ENCODE measurements at regions of chr5 and their contacts with region 1.

Region 1: GRCh38 chr5:161446655-161447054 is 99.9 kb downstream of the GABRB2 start:
- DNase-seq: no peak
- H3K4me3 ChIP-seq: no peak overlapping the region
- H3K27ac ChIP-seq: no peak overlapping the region
- H3K4me1 ChIP-seq: peaks cover 0 to 2% (median 0%) of the 10 kb centered on the region in 4 donors
- H3K27me3 ChIP-seq: no peaks in the 10 kb centered on the region
- CTCF ChIP-seq: no peak

Region 2: DNA sequence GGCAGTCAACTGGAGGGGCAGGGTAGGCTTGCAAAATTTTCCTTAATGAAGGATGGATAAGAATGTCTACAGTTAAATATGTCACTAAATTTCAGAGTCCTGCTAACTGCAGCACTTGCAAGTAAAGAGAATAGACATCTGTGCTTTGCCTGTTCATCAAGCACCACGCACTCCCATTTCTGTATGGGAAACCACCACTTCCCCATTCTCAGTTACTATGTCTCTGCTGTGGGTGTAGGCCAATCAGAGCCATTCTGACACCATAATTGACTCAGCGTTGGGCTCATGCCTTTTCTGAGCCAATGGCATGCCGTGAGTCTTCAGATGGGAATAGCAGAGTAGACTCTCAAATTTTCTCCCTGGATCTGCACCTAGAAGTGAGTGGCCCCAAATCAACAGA is 147.6 kb before region 1 on chr5:
- intact Hi-C with region 1: no loop called
- DNase-seq: no peak
- H3K4me3 ChIP-seq: no peak overlapping the region
- H3K27ac ChIP-seq: no peak overlapping the region
- H3K4me1 ChIP-seq: peaks cover 0 to 22% (median 2%) of the 10 kb centered on the region in 4 donors
- H3K27me3 ChIP-seq: no peaks in the 10 kb centered on the region
- CTCF ChIP-seq: no peak

Region 3: DNA sequence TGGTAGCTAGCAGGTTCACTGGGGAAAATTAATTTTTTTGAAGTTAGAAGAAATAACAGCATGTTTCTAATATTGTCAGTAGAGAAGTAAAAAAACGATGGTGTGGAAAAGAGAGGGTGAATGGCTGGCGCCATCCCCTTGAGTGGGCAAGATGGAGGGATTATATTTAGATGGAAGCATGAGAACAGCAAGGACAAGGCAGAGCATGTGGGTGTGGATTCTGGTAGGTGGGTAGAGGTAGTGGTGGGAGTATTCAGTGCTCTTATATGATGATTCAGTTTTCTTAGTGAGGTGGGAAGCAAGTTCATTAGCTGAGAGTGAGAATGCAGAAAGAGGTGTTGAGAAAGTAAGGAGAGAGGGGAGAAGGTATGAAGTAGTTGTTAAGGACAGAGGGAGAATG is 88.2 kb before region 1 on chr5:
- intact Hi-C with region 1: no loop called
- DNase-seq: no peak
- H3K4me3 ChIP-seq: no peak overlapping the region
- H3K27ac ChIP-seq: no peak overlapping the region
- H3K4me1 ChIP-seq: no peaks in the 10 kb centered on the region
- H3K27me3 ChIP-seq: no peaks in the 10 kb centered on the region
- CTCF ChIP-seq: no peak

Region 4: DNA sequence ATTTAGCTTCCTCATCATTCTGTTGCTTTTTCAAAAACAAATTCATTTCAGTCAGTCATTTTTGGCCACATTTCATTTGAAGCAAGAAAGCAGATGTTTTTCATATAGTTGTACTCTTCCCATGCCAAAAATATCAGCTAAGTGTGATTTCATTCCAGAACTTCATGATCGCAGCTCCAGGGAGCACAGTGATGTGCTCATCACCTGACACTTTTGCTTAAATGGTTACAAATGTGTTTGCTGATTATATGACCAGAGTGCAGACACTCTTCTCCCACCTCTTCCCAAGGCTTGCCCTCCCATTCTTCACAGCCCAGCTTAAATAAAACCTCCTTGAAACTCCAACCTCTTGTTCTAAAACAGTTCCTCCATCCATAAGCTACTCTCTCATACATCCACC is 67.3 kb after region 1 on chr5:
- intact Hi-C with region 1: no loop called
- DNase-seq: no peak
- H3K4me3 ChIP-seq: no peak overlapping the region
- H3K27ac ChIP-seq: no peak overlapping the region
- H3K4me1 ChIP-seq: no peaks in the 10 kb centered on the region
- H3K27me3 ChIP-seq: no peaks in the 10 kb centered on the region
- CTCF ChIP-seq: no peak

Region 5: GRCh38 chr5:161685461-161685860 is 238.8 kb after region 1 on chr5 and contains the start of gene GABRA6:
- intact Hi-C with region 1: loop called (anchors 10 kb)
- DNase-seq: no peak
- H3K4me3 ChIP-seq: no peak within 1 kb of the TSS
- H3K27ac ChIP-seq: no peak within 1 kb of the TSS
- H3K4me1 ChIP-seq: no peaks in the 10 kb centered on the region
- H3K27me3 ChIP-seq: no peaks in the 10 kb centered on the region
- CTCF ChIP-seq: no peak

Region 6: GRCh38 chr5:163079618-163080017 is 1633.0 kb after region 1 on chr5:
- intact Hi-C with region 1: no loop called
- DNase-seq: no peak
- H3K4me3 ChIP-seq: no peak overlapping the region
- H3K27ac ChIP-seq: no peak overlapping the region
- H3K4me1 ChIP-seq: no peaks in the 10 kb centered on the region
- H3K27me3 ChIP-seq: no peaks in the 10 kb centered on the region
- CTCF ChIP-seq: no peak